ENCODE measurements at regions of chr10 and their contacts with region 1.

Region 1: GRCh38 chr10:110746254-110746826 is 102.2 kb downstream of the RBM20 start:
- DNase-seq: peak in 8 of 9 donors; percentile 31 to 56 (median 46)
- ATAC-seq: peak; percentile 55
- H3K4me3 ChIP-seq: no peak overlapping the region
- H3K4me3 Mint-ChIP-seq: no peak overlapping the region
- H3K27ac ChIP-seq: no peak overlapping the region
- H3K27ac Mint-ChIP-seq: peak overlapping the region in 8 of 9 donors; percentile 51 to 94 (median 88)
- H3K4me1 ChIP-seq: peaks cover 5 to 47% of the 10 kb centered on the region in 2 donors
- H3K4me1 Mint-ChIP-seq: peaks cover 23 to 95% (median 87%) of the 10 kb centered on the region in 7 donors
- H3K27me3 ChIP-seq: no peaks in the 10 kb centered on the region
- H3K27me3 Mint-ChIP-seq: no peaks in the 10 kb centered on the region

Region 2: GRCh38 chr10:110304780-110305421 is 441.4 kb before region 1 on chr10 and contains the start of gene SMNDC1:
- CTCF ChIA-PET with region 1: interaction called, 3 read pairs
- POLR2A ChIA-PET with region 1: no interaction called
- intact Hi-C with region 1: loop called (anchors 5 to 10 kb)
- DNase-seq: peak; percentile 93 to 97 (median 96)
- ATAC-seq: peak; percentile 94
- H3K4me3 ChIP-seq: peak within 1 kb of the TSS; percentile 91
- H3K4me3 Mint-ChIP-seq: peak within 1 kb of the TSS; percentile 94 to 99 (median 98)
- H3K27ac ChIP-seq: peak within 1 kb of the TSS; percentile 89
- H3K27ac Mint-ChIP-seq: peak within 1 kb of the TSS; percentile 97 to 100 (median 100)
- H3K4me1 ChIP-seq: peaks cover 32 to 38% of the 10 kb centered on the region in 2 donors
- H3K4me1 Mint-ChIP-seq: peaks cover 26 to 61% (median 55%) of the 10 kb centered on the region in 7 donors
- H3K27me3 ChIP-seq: no peaks in the 10 kb centered on the region
- H3K27me3 Mint-ChIP-seq: no peaks in the 10 kb centered on the region
- total RNA-seq, gene SMNDC1: 34.4 to 43.1 (median 40.1) TPM

Region 3: DNA sequence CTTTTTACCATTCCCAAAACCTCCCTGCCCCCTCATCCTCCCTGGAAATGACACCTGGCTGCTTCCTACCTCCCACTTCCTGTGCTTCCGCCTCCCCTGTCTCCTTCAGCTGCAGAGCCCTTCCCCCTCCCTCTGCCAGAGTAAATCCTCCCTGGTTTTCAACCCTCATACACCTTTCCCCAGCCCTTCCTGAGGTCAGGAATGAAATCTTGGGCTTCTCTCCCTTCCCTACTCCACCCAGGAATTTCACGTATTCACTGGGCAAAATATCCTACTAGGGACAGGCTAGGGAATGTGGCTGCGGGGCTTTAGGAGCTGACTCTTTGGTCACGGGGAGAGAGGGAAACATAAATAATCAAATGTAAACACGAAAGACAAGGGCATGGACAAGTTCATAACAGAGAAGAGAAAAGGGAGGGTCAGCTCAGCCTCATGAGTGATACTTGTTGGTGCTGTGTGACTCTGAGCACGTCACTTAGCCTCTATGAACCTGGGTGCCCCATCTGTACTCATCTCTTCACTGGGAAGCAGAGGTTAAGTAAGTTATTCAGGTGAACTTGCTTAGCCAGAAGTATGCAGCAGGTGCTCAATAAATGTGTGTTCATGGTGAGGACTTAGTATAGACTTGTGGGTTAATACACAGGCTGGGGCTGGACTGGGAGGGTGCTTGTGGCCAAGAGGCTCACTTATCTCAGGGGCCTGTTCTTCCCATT is 258.8 kb before region 1 on chr10:
- CTCF ChIA-PET with region 1: no interaction called
- POLR2A ChIA-PET with region 1: no interaction called
- intact Hi-C with region 1: no loop called
- DNase-seq: no peak
- ATAC-seq: no peak
- H3K4me3 ChIP-seq: no peak overlapping the region
- H3K4me3 Mint-ChIP-seq: no peak overlapping the region
- H3K27ac ChIP-seq: no peak overlapping the region
- H3K27ac Mint-ChIP-seq: peak overlapping the region in 1 of 9 donors; percentile 4
- H3K4me1 ChIP-seq: no peaks in the 10 kb centered on the region
- H3K4me1 Mint-ChIP-seq: peaks cover 0 to 14% (median 0%) of the 10 kb centered on the region in 7 donors
- H3K27me3 ChIP-seq: no peaks in the 10 kb centered on the region
- H3K27me3 Mint-ChIP-seq: peaks cover 7 to 10% (median 9%) of the 10 kb centered on the region in 5 donors

Region 4: DNA sequence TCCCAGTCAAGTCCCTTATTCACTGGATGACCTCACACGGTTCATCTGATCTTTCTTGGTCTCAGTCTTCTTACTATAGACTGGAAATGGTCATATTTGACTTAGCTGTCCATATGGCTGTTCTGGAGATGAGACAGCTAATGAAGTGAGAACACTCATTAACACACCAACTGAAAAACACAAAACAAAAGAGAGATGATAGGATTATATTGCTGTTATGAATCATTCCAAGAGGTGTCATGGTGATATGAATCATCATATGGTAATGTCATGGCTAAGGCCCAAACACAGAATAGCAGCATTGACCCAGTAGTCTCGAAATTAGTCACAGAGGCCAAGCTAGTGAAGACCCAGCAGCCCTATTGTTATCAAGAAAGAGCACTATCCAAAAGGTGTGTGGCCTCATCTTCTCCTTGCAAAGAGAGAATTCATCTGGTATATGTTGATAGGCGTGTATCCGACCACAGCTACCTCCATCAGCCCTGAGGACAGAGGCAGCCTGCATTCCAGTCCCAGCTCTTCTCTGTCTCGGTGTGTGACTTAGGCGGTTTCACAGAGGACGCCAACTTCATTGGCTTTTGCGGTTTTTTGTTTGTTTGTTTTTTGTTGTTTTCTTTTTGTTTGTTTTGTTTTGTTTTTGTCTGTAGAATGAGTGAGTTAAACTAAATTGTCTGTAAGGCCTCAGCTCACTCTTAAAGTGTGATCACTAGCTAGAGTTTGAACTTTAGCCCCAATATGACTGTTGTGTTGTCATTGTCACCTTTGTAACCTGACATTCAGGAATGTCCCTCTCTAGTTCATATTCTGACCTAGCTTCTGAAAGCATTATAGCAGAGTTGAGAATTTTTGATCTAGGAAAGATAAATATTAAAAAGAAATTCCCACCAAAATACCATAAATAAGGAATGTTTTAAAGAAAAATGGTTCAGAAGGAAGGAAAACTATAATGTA is 28.0 kb after region 1 on chr10:
- CTCF ChIA-PET with region 1: no interaction called
- POLR2A ChIA-PET with region 1: no interaction called
- intact Hi-C with region 1: loop called in 1 of 2 experiments (anchors 2 kb)
- DNase-seq: peak in 1 of 9 donors; percentile 54
- ATAC-seq: peak; percentile 41
- H3K4me3 ChIP-seq: no peak overlapping the region
- H3K4me3 Mint-ChIP-seq: peak overlapping the region in 1 of 10 donors; percentile 42
- H3K27ac ChIP-seq: no peak overlapping the region
- H3K27ac Mint-ChIP-seq: peak overlapping the region in 2 of 9 donors; percentile 47 to 88
- H3K4me1 ChIP-seq: peaks cover 0 to 11% of the 10 kb centered on the region in 2 donors
- H3K4me1 Mint-ChIP-seq: peaks cover 2 to 39% (median 9%) of the 10 kb centered on the region in 7 donors
- H3K27me3 ChIP-seq: no peaks in the 10 kb centered on the region
- H3K27me3 Mint-ChIP-seq: peaks cover 0 to 3% (median 0%) of the 10 kb centered on the region in 5 donors

Region 5: DNA sequence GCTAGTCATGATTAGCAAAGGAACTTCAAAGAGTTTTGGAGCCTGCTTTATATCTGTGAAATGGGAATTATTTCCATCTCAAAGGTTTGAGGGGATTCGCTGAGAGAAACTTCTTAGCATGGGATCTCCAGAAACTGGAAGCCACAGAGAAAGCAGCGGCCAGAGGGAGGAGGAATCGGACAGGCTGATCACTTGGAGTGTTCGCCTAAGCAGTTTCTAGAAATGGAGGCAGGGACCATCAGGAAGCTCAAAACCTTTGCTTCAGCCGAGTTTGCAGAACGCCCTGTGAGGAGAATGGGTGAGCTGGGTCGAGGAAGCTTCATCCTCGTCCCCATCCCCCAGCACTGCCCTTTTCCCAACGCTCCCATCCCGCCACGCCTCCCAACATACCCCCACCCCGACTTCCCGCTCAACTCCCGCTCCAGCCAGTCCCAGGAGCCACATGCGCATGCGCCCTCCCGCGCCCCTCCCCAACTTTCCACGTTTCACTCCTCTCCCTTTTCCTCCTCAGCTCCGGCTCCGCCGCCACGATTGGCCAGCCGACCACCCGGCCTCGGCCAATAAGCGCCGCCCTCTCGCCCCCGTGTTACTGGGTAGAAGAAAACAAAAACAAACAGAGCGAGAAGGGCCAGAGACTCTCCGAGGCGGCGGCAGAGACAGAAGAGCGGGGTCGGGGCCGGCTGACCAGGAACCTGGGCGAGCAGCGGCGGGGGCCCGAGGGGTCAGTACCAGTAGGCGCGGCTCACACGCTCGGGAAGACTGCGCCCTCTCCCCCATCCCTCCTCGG is 125.2 kb after region 1 on chr10 and contains the start of gene PDCD4:
- CTCF ChIA-PET with region 1: interaction called, 6 read pairs
- POLR2A ChIA-PET with region 1: interaction called, 11 read pairs
- intact Hi-C with region 1: loop called (anchors 1 kb)
- DNase-seq: peak; percentile 83 to 98 (median 90)
- ATAC-seq: peak; percentile 78
- H3K4me3 ChIP-seq: peak within 1 kb of the TSS; percentile 78
- H3K4me3 Mint-ChIP-seq: peak within 1 kb of the TSS; percentile 79 to 99 (median 96)
- H3K27ac ChIP-seq: peak within 1 kb of the TSS; percentile 100
- H3K27ac Mint-ChIP-seq: peak within 1 kb of the TSS; percentile 95 to 100 (median 99)
- H3K4me1 ChIP-seq: peaks cover 53 to 71% of the 10 kb centered on the region in 2 donors
- H3K4me1 Mint-ChIP-seq: peaks cover 43 to 77% (median 68%) of the 10 kb centered on the region in 7 donors
- H3K27me3 ChIP-seq: no peaks in the 10 kb centered on the region
- H3K27me3 Mint-ChIP-seq: peaks cover 0 to 2% (median 0%) of the 10 kb centered on the region in 5 donors
- total RNA-seq, gene PDCD4: 93.7 to 283 (median 223) TPM

Region 6: DNA sequence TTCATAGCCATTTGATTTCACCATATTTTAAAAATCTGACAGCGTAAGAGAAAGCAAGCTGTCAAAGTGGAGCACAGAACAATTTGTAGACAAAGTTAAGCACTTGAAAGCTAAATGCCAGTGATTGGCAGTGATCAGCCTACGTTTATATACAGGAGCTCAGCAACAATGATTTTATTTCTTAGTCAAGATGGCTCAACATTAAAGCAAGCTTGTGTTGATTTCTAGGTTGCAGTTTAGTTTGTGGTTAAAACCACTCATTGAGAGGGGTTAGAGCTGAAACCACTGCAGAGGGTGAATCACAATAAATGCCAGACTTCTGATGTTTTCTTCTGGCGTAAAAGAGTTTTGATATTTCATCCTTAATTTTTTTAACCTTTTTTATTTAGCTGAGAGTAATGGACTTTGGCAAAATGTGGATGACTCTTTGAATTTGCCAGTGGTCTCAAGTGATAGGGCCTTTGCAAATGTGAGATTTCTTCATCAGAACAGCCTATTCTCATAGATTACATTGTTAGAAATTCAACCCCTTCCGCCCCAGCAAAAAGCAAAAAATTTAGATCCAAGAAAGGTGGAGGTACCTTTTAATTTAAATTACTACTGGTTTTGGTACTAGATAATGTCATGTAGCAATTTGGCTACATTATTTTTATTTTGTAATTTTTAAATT is 246.8 kb after region 1 on chr10:
- CTCF ChIA-PET with region 1: no interaction called
- POLR2A ChIA-PET with region 1: no interaction called
- intact Hi-C with region 1: loop called (anchors 5 to 10 kb)
- DNase-seq: peak in 7 of 9 donors; percentile 44 to 74 (median 59)
- ATAC-seq: peak; percentile 95
- H3K4me3 ChIP-seq: no peak overlapping the region
- H3K4me3 Mint-ChIP-seq: peak overlapping the region in 8 of 10 donors; percentile 27 to 78 (median 69)
- H3K27ac ChIP-seq: no peak overlapping the region
- H3K27ac Mint-ChIP-seq: peak overlapping the region; percentile 38 to 83 (median 63)
- H3K4me1 ChIP-seq: peaks cover 6 to 21% of the 10 kb centered on the region in 2 donors
- H3K4me1 Mint-ChIP-seq: peaks cover 27 to 62% (median 52%) of the 10 kb centered on the region in 7 donors
- H3K27me3 ChIP-seq: no peaks in the 10 kb centered on the region
- H3K27me3 Mint-ChIP-seq: no peaks in the 10 kb centered on the region

Region 7: DNA sequence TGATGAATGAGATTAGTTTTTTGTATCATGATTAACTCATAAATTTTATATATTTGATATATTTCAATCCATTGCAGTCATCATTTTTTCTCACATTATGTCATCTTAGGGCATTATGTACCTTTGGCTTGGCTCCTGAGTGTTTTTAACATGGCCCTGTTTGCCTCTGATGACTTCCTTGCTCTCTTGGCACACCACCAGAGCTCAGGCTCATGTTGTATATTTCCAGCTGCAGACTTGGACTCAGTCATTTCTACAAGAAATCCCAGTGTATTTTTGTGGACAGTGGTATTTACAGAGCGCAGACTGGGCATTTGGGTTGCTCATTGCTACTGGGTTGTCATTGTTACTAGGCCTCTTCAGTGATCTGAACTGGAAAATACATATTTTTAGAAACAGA is 519.0 kb after region 1 on chr10:
- CTCF ChIA-PET with region 1: no interaction called
- POLR2A ChIA-PET with region 1: no interaction called
- intact Hi-C with region 1: loop called in 1 of 2 experiments (anchors 2 kb)
- DNase-seq: no peak
- ATAC-seq: no peak
- H3K4me3 ChIP-seq: no peak overlapping the region
- H3K4me3 Mint-ChIP-seq: no peak overlapping the region
- H3K27ac ChIP-seq: no peak overlapping the region
- H3K27ac Mint-ChIP-seq: no peak overlapping the region
- H3K4me1 ChIP-seq: no peaks in the 10 kb centered on the region
- H3K4me1 Mint-ChIP-seq: no peaks in the 10 kb centered on the region
- H3K27me3 ChIP-seq: no peaks in the 10 kb centered on the region
- H3K27me3 Mint-ChIP-seq: peaks cover 22 to 58% (median 51%) of the 10 kb centered on the region in 5 donors

Region 8: DNA sequence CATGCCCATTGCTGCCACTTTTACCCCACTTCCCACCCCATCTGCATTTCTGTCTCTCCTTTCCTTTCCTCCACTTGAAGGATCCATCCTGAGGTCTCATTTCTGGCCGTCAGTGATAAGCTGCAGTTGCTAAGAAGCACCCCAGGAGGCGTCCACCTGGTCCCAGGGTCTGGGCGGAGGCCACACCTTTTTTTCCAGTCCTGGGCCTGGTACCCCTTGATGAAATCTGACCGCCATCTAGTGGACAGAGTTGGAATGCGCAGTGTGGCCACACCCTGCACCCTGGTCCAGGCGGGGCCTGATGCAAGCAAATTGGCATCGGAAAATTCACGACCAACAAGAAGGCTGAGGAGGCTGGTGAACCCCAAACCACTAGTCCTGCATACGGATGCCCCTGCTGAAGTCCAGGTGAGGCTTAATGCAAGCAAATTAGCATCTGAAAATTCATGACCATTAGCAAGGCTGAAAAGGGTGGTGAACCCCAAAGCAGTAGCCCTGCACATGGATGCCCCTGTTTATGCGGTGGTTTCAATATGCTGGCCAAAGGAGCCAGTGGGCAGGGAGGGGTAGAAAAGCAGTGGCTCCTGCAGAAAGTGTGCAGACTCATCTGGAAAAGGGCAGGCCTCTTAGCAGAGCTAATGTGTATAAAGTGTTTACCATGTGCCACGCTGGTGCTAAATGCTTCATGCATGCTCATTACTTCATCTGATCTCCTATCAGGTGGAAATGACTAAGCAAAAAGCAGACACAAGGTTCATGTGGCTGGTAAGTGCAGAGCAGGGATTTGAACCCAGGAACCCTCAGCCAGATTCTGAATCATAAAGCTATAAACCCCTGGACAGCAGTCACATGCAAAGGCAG is 1394.0 kb after region 1 on chr10:
- CTCF ChIA-PET with region 1: interaction called, 3 read pairs
- POLR2A ChIA-PET with region 1: no interaction called
- intact Hi-C with region 1: loop called in 1 of 2 experiments (anchors 2 kb)
- DNase-seq: peak; percentile 15 to 72 (median 43)
- ATAC-seq: peak; percentile 87
- H3K4me3 ChIP-seq: no peak overlapping the region
- H3K4me3 Mint-ChIP-seq: no peak overlapping the region
- H3K27ac ChIP-seq: no peak overlapping the region
- H3K27ac Mint-ChIP-seq: no peak overlapping the region
- H3K4me1 ChIP-seq: no peaks in the 10 kb centered on the region
- H3K4me1 Mint-ChIP-seq: peaks cover 0 to 4% (median 0%) of the 10 kb centered on the region in 7 donors
- H3K27me3 ChIP-seq: no peaks in the 10 kb centered on the region
- H3K27me3 Mint-ChIP-seq: peaks cover 0 to 9% (median 0%) of the 10 kb centered on the region in 5 donors

Measured in naive thymus-derived CD4-positive, alpha-beta T cell (primary cell).